Stomach (tissue), 19 donors: ENCODE measurements at regions of chr2 and their contacts with region 1.

Region 1: GRCh38 chr2:20642055-20642971 is 8.6 kb downstream of the HS1BP3 start:
- DNase-seq: peak; percentile 87 to 93
- H3K4me3 ChIP-seq: no peak overlapping the region
- H3K27ac ChIP-seq: peak overlapping the region in 4 of 5 donors; percentile 30 to 91 (median 85)
- H3K4me1 ChIP-seq: peaks cover 13 to 52% (median 32%) of the 10 kb centered on the region in 4 donors
- H3K27me3 ChIP-seq: no peaks in the 10 kb centered on the region
- CTCF ChIP-seq: peak in 5 of 7 experiments; percentile 89 to 96 (median 93)
- EP300 ChIP-seq: no peak
- POLR2A ChIP-seq: no peak

Region 2: GRCh38 chr2:20446917-20447436 is 195.3 kb before region 1 on chr2 and contains the start of gene RHOB:
- intact Hi-C with region 1: loop called (anchors 10 kb)
- DNase-seq: peak; percentile 98 to 99
- H3K4me3 ChIP-seq: peak within 1 kb of the TSS; percentile 75 to 98 (median 90)
- H3K27ac ChIP-seq: peak within 1 kb of the TSS; percentile 98 to 100 (median 99)
- H3K4me1 ChIP-seq: peaks cover 25 to 68% (median 45%) of the 10 kb centered on the region in 4 donors
- H3K27me3 ChIP-seq: no peaks in the 10 kb centered on the region
- CTCF ChIP-seq: no peak
- EP300 ChIP-seq: no peak
- POLR2A ChIP-seq: peak in 2 of 4 donors; percentile 92 to 98
- total RNA-seq, gene RHOB: 353 to 1,146 (median 607) TPM

Region 3: DNA sequence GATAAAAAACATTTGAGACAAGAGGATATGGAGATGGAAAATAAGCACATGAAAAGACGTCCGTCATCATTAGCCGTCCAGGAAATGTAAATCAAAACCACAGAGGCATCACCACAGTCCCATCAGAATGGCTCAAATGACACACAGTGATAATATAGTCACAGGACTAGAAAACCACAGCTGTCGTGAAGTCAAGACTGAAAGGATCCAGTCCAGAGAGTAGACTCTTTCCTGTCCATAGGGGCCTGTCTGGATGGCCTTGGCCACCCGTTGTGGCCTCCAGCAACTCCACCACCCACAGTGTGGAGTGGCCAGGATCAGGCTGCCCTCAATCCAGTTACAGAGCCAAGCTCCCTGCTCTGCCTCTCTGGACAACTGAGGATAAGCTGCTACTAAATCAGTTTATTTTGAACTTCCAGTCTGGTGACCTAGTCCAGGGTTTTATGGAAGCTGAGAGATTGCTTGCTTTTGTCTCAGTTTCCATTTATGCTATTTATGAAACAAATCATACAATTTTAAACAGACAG is 135.1 kb before region 1 on chr2:
- intact Hi-C with region 1: no loop called
- DNase-seq: no peak
- H3K4me3 ChIP-seq: no peak overlapping the region
- H3K27ac ChIP-seq: peak overlapping the region in 1 of 5 donors; percentile 62
- H3K4me1 ChIP-seq: peaks cover 0 to 18% (median 9%) of the 10 kb centered on the region in 4 donors
- H3K27me3 ChIP-seq: no peaks in the 10 kb centered on the region
- CTCF ChIP-seq: no peak
- EP300 ChIP-seq: no peak
- POLR2A ChIP-seq: no peak

Region 4: DNA sequence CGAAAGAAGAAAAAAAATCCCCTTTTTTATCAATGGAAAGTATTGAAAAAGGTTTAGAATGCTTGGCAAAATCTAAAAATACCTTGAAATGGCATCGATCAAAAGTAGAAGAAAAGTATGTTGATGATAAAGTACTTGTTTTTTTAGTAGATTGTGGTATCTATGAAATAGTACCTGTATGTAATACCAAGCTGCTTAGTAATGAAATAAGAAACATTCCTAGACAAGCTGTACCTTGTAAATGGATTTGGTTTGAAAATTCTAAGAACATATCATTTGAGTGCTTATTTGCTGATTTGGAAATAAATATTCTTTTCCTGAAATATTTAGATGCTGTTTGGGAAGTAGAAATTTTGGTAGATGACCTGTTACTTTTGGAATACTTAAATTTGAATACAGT is 499.8 kb after region 1 on chr2:
- intact Hi-C with region 1: no loop called
- DNase-seq: no peak
- H3K4me3 ChIP-seq: no peak overlapping the region
- H3K27ac ChIP-seq: no peak overlapping the region
- H3K4me1 ChIP-seq: no peaks in the 10 kb centered on the region
- H3K27me3 ChIP-seq: no peaks in the 10 kb centered on the region
- CTCF ChIP-seq: no peak
- EP300 ChIP-seq: no peak
- POLR2A ChIP-seq: no peak